ENCODE measurements at regions of chr2 and their contacts with region 1.

Region 1: GRCh38 chr2:217922101-217923006 is 80.4 kb downstream of the TNS1 start:
- DNase-seq: no peak
- H3K4me3 ChIP-seq: no peak overlapping the region
- H3K27ac ChIP-seq: peak overlapping the region; percentile 85 to 95 (median 89)
- H3K4me1 ChIP-seq: peaks cover 31 to 88% (median 48%) of the 10 kb centered on the region in 4 donors
- H3K27me3 ChIP-seq: no peaks in the 10 kb centered on the region
- CTCF ChIP-seq: peak in 1 of 5 experiments; percentile 12
- EP300 ChIP-seq: no peak
- POLR2A ChIP-seq: peak; percentile 13

Region 2: DNA sequence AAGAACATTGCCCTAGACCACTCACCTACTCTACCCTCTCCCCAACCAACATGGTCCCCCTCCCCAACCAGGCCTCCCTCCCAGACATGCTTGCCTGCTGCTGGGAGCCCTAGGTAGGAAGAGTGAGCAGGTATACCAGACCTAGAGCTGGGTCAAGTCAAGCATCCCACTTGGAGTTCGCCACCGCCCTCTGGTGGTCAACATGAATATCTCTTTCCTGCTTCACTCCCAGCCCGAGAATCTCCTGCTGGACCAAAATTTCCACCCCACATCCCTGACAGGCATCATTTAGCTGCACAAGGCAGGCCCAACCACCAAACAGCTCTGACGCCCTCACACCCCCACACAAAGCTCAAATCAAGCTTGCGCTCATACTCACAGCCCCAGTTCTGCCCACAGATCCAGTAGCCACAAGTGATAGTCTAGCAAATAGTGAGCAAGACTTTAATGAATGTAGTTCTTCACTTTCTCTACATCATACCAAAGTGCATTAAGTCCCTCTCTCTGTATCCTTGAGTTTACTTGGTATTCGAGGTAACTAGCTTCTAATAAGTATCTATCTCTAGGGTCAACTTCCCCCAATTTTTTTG is 35.5 kb before region 1 on chr2:
- in situ Hi-C with region 1: no loop called
- intact Hi-C with region 1: no loop called
- DNase-seq: peak; percentile 81
- H3K4me3 ChIP-seq: no peak overlapping the region
- H3K27ac ChIP-seq: peak overlapping the region in 2 of 4 donors; percentile 7 to 58
- H3K4me1 ChIP-seq: no peaks in the 10 kb centered on the region
- H3K27me3 ChIP-seq: no peaks in the 10 kb centered on the region
- CTCF ChIP-seq: peak; percentile 74 to 83 (median 78)
- EP300 ChIP-seq: no peak
- POLR2A ChIP-seq: no peak

Region 3: DNA sequence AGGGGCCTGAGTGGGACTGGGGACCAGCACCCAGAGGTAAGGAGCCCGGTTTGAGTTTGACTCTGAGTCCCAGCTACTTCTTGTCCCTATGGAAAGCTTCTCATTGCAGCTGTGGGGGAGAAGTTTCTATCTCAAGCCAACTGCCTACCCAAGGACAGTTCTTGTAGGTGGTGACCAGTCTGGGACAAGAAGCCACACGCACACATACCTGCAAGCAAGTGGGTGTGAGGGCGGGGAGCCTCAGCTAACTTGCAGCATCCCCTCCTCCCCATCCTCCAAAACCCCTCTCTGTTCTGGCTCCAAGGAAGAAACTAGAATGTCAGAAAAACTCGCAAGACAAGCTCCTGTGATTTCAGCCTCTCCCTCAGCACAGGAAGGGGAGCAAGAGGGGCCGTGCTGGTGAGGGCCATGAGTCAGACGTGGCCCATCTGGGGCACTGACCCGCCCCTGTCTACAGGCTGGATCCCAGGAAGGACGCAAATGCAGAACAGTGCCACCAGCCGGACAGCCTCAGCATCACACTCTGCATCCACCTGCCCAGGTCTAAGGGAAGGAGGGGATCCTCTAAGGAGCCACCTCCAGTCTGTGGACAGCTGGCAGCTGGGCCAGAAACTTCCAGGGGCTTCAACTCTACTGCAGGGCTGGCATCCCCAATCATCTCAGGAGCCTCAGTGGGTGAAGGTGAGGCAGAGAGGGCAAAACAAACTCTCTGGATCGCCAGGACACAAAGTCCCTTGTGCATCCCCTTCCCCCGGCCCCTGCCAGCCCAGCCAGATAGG is 22.9 kb before region 1 on chr2:
- in situ Hi-C with region 1: no loop called
- intact Hi-C with region 1: loop called (anchors 2 kb)
- DNase-seq: peak; percentile 72
- H3K4me3 ChIP-seq: no peak overlapping the region
- H3K27ac ChIP-seq: peak overlapping the region; percentile 65 to 95 (median 89)
- H3K4me1 ChIP-seq: peaks cover 24 to 62% (median 49%) of the 10 kb centered on the region in 4 donors
- H3K27me3 ChIP-seq: no peaks in the 10 kb centered on the region
- CTCF ChIP-seq: peak; percentile 52 to 64 (median 58)
- EP300 ChIP-seq: no peak
- POLR2A ChIP-seq: no peak

Region 4: DNA sequence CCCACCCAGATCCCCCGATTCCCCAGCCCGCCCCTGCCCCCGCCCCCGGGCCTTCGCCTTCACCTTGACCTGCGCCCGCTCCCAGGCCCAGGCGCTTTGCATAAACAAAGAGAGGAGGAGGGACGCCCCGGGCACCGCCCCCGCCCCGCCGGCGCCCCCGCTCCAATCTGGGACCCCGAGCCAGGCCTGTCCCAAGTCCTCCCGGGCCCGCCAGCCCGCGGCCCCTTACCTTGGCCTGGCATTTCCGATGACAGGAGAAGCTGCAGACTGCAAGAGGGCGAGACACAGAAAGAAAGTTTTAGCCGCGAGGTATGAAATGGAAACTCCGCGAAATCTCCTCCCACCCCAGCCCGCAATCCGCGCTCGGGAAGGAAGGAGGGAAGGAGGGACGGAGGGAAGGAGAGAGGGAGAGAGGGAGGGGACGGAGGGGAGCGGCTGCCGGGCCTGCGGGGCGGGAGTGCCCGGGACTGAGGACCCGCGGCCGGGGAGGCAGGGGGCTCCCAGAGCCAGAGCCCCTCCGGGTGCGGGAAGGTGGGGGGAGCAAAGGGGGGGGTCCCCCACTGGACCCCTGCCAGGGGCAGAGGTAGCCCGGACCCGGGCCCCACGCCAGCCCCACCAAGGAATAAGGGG is 56.3 kb after region 1 on chr2:
- in situ Hi-C with region 1: no loop called
- intact Hi-C with region 1: loop called (anchors 10 kb)
- DNase-seq: no peak
- H3K4me3 ChIP-seq: peak overlapping the region; percentile 44 to 57 (median 51)
- H3K27ac ChIP-seq: peak overlapping the region; percentile 75 to 90 (median 82)
- H3K4me1 ChIP-seq: peaks cover under 1 to 28% (median 11%) of the 10 kb centered on the region in 4 donors
- H3K27me3 ChIP-seq: no peaks in the 10 kb centered on the region
- CTCF ChIP-seq: no peak
- EP300 ChIP-seq: no peak
- POLR2A ChIP-seq: no peak

Region 5: DNA sequence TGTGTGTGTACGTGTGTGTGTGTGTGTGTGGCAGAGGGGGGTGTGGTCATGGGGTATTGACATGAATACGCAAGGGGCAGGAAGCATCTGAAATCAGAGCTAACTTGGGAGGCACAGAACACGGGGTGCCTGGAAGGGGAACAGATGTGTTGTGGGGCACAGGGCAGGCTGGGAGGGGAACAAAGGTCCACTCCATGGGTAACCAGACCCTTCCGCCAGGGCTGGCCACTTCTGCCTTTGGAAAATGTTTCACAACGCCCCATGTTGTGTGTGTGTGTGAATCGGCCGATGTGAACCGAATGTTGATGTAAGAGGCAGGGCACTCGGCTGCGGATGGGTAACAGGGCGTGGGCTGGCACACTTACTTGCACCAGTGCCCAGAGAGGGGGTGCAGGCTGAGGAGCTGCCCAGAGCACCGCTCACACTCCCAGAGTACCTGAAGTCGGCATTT is 459.6 kb after region 1 on chr2 and contains the start of gene SLC11A1:
- in situ Hi-C with region 1: no loop called
- intact Hi-C with region 1: no loop called
- DNase-seq: peak; percentile 32
- H3K4me3 ChIP-seq: no peak within 1 kb of the TSS
- H3K27ac ChIP-seq: peak within 1 kb of the TSS in 3 of 4 donors; percentile 14 to 43 (median 29)
- H3K4me1 ChIP-seq: peaks cover 0 to under 1% (median 0%) of the 10 kb centered on the region in 4 donors
- H3K27me3 ChIP-seq: no peaks in the 10 kb centered on the region
- CTCF ChIP-seq: no peak
- EP300 ChIP-seq: peak; percentile 56
- POLR2A ChIP-seq: peak; percentile 45
- total RNA-seq, gene SLC11A1: 2.6 to 8.4 (median 6.3) TPM